Ascending aorta (tissue), 2 donors: ENCODE measurements at regions of chr10 and their contacts with region 1.

Region 1: DNA sequence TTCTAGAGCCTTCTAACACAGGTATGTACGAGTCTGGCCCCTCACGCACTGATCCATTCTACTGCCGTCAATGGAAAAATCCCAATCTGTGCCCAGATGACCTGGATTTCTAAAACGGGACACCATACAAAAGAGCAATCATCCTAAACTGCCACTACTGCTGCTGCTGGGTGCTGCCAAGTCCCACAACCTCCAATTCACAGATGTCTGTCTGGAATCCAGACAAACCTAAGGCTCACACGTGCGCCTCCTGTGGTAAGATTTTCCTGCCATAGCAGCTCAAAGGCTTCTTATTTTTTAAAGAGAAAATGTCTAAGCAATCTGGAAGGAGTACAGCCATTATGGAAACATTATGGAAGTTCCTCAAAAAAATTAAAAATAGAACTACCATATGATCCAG is 40.9 kb downstream of the JCAD start:
- DNase-seq: no peak
- H3K4me3 ChIP-seq: no peak overlapping the region
- H3K27ac ChIP-seq: peak overlapping the region; percentile 61 to 81
- H3K4me1 ChIP-seq: peaks cover 9 to 47% of the 10 kb centered on the region in 2 donors
- H3K27me3 ChIP-seq: no peaks in the 10 kb centered on the region
- CTCF ChIP-seq: peak in 2 of 3 experiments; percentile 21 to 34

Region 2: DNA sequence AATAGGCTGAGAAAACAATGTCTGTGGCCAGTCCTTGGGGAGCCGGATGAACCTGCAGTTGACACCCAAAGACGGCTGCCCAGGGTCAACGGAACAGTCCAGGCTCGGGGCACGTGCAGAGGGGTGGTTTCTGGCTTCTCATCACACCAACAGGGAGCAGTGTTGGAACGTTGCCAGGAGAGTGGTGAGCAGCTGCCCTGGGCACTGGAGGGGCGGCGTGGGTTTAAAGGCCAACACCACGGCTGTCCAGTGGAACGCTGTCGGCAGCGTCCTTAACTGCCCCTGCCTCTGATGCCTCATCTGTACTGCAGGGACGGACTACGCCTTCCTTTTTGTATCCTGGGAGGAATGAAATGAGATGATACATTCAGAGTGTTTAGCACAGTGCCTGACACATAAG is 21.1 kb after region 1 on chr10:
- intact Hi-C with region 1: loop called (anchors 2 kb)
- DNase-seq: no peak
- H3K4me3 ChIP-seq: no peak overlapping the region
- H3K27ac ChIP-seq: peak overlapping the region; percentile 23 to 58
- H3K4me1 ChIP-seq: peaks cover 0 to 32% of the 10 kb centered on the region in 2 donors
- H3K27me3 ChIP-seq: no peaks in the 10 kb centered on the region
- CTCF ChIP-seq: no peak

Region 3: DNA sequence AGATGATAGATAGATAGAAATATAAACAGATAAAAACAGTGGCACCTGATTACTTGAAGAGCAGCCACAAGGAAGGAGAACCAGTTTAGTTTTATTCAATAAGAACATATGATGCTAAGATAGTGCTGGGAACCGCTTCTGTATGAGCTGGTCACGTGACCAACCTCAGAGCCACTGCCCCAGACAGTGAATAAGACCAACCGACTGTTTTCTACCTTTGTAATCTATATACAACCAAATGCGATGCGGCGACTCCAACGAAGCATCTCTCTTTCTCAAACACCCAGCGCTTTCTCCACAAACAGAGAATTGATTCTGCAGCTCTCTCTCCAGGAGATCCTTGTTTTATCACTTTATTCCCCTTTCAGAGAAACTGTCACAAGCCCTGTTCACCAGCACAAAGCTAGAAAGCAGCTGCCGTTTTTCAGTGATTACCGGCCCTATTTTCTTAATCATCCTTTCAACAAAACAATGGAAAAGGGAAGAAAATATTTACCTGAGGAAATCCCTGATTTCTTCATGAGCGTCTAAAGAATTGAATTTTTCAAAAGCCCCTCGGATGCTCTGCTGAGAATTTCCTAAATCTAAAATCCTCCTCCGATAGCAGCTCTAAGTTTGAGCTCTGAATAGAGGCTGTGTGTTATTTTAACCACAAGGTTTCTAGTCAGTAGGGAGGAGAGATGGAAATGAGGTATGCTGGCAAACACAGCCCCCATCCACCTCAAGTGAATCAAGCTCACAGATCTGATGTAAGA is 96.6 kb after region 1 on chr10:
- intact Hi-C with region 1: no loop called
- DNase-seq: no peak
- H3K4me3 ChIP-seq: peak overlapping the region; percentile 7 to 45
- H3K27ac ChIP-seq: no peak overlapping the region
- H3K4me1 ChIP-seq: peaks cover 0 to 8% of the 10 kb centered on the region in 2 donors
- H3K27me3 ChIP-seq: no peaks in the 10 kb centered on the region
- CTCF ChIP-seq: no peak